ENCODE measurements at regions of chr6 and their contacts with region 1.

Region 1: GRCh38 chr6:19851241-19852089 is 14.3 kb downstream of the ID4 start:
- DNase-seq: peak; percentile 72
- H3K4me3 Mint-ChIP-seq: peak overlapping the region; percentile 40
- H3K27ac Mint-ChIP-seq: peak overlapping the region; percentile 77
- H3K4me1 Mint-ChIP-seq: peaks cover 13% of the 10 kb centered on the region
- H3K27me3 Mint-ChIP-seq: no peaks in the 10 kb centered on the region
- CTCF ChIP-seq: peak; percentile 87

Region 2: DNA sequence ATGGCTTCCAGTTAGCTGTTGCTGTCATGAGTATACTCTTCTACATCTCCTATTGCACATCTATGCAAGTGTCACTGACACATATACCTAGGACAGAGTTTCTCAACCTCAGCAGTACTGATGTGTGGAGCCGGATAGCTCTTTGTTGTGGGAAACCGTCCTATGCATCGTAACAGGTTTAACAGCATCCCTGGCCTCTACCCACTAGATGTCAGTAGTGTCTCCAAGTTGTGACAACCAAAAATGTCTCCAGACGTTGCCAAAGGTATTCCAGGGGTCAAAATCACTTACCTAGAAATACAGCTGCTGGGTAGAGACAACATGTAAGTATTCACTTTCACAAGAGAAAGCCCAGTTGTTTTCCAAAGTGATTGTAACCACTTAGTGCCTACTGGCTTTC is 826.7 kb before region 1 on chr6:
- CTCF ChIA-PET with region 1: no interaction called
- intact Hi-C with region 1: loop called (anchors 2 kb)
- DNase-seq: peak; percentile 18
- H3K4me3 Mint-ChIP-seq: no peak overlapping the region
- H3K27ac Mint-ChIP-seq: no peak overlapping the region
- H3K4me1 Mint-ChIP-seq: no peaks in the 10 kb centered on the region
- H3K27me3 Mint-ChIP-seq: no peaks in the 10 kb centered on the region
- CTCF ChIP-seq: no peak

Region 3: GRCh38 chr6:19368509-19368908 is 483.0 kb before region 1 on chr6:
- CTCF ChIA-PET with region 1: no interaction called
- intact Hi-C with region 1: loop called (anchors 1 kb)
- DNase-seq: no peak
- H3K4me3 Mint-ChIP-seq: no peak overlapping the region
- H3K27ac Mint-ChIP-seq: no peak overlapping the region
- H3K4me1 Mint-ChIP-seq: no peaks in the 10 kb centered on the region
- H3K27me3 Mint-ChIP-seq: no peaks in the 10 kb centered on the region
- CTCF ChIP-seq: no peak

Region 4: DNA sequence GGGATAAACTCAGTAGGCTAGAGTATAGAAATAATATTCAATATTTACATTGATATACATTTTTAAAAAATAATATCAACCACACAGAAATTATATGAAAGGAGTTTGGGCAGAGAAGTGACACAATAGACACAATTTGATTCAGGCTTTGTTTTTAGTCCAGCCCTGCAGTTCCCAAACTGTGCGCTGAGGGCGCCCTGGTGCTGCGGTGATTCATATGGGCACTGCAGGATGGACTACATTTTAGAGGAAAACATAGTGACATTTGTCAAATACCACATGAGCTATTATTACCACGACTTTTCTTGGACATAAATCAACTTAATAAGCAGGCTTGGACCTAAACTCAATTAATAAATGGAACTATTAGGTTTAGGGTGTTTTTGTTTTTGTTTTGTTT is 378.6 kb before region 1 on chr6:
- CTCF ChIA-PET with region 1: no interaction called
- intact Hi-C with region 1: loop called (anchors 10 kb)
- DNase-seq: peak; percentile 27
- H3K4me3 Mint-ChIP-seq: no peak overlapping the region
- H3K27ac Mint-ChIP-seq: no peak overlapping the region
- H3K4me1 Mint-ChIP-seq: peaks cover 9% of the 10 kb centered on the region
- H3K27me3 Mint-ChIP-seq: no peaks in the 10 kb centered on the region
- CTCF ChIP-seq: peak; percentile 35

Region 5: DNA sequence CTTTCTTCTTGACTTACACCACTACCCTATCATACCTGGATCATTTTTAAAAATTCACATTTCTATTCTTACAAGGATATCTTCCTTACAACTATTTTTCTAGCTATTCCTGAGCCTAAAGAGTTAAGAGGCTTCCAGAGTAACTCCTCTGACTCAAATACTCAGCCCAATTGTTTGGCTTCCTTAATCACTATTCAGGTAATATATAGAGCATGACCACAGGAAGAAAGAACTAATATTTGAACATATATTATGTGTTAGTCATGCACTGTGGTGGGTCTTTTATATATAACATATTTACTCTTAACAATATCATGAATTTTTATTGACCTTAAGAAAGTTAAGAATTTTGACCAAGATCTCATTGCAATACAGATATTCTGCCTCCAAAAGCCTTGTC is 56.3 kb before region 1 on chr6:
- CTCF ChIA-PET with region 1: no interaction called
- intact Hi-C with region 1: no loop called
- DNase-seq: no peak
- H3K4me3 Mint-ChIP-seq: no peak overlapping the region
- H3K27ac Mint-ChIP-seq: peak overlapping the region; percentile 14
- H3K4me1 Mint-ChIP-seq: peaks cover 39% of the 10 kb centered on the region
- H3K27me3 Mint-ChIP-seq: no peaks in the 10 kb centered on the region
- CTCF ChIP-seq: no peak

Region 6: GRCh38 chr6:19925533-19925932 is 74.1 kb after region 1 on chr6:
- CTCF ChIA-PET with region 1: no interaction called
- intact Hi-C with region 1: no loop called
- DNase-seq: no peak
- H3K4me3 Mint-ChIP-seq: no peak overlapping the region
- H3K27ac Mint-ChIP-seq: no peak overlapping the region
- H3K4me1 Mint-ChIP-seq: no peaks in the 10 kb centered on the region
- H3K27me3 Mint-ChIP-seq: peaks cover 91% of the 10 kb centered on the region
- CTCF ChIP-seq: no peak

Region 7: GRCh38 chr6:20056350-20056992 is 205.0 kb after region 1 on chr6:
- CTCF ChIA-PET with region 1: interaction called, 4 read pairs
- intact Hi-C with region 1: loop called (anchors 1 kb)
- DNase-seq: peak; percentile 43
- H3K4me3 Mint-ChIP-seq: no peak overlapping the region
- H3K27ac Mint-ChIP-seq: no peak overlapping the region
- H3K4me1 Mint-ChIP-seq: no peaks in the 10 kb centered on the region
- H3K27me3 Mint-ChIP-seq: peaks cover 14% of the 10 kb centered on the region
- CTCF ChIP-seq: peak; percentile 68

Measured in Calu3 (cell line).